Mammary epithelial cell (primary cell): ENCODE measurements at regions of chr9 and their contacts with region 1.

Region 1: GRCh38 chr9:134325817-134326723 is at the start of gene RXRA:
- DNase-seq: peak; percentile 77
- H3K4me3 ChIP-seq: peak within 1 kb of the TSS; percentile 64 to 78 (median 69)
- H3K27ac ChIP-seq: peak within 1 kb of the TSS; percentile 77
- H3K4me1 ChIP-seq: peaks cover 64% of the 10 kb centered on the region
- H3K27me3 ChIP-seq: no peaks in the 10 kb centered on the region
- CTCF ChIP-seq: no peak
- total RNA-seq, gene RXRA: 31.0 to 39.2 TPM

Region 2: GRCh38 chr9:134163353-134164196 is 162.5 kb before region 1 on chr9:
- CTCF ChIA-PET with region 1: no interaction called
- dilution Hi-C with region 1: no loop called
- in situ Hi-C with region 1: loop called in 1 of 2 experiments (anchors 10 kb)
- intact Hi-C with region 1: loop called (anchors 2 kb)
- DNase-seq: peak; percentile 25
- H3K4me3 ChIP-seq: peak overlapping the region; percentile 24 to 45 (median 41)
- H3K27ac ChIP-seq: no peak overlapping the region
- H3K4me1 ChIP-seq: peaks cover 5% of the 10 kb centered on the region
- H3K27me3 ChIP-seq: no peaks in the 10 kb centered on the region
- CTCF ChIP-seq: peak in 1 of 2 donors; percentile 13

Region 3: GRCh38 chr9:134358662-134359319 is 32.7 kb after region 1 on chr9:
- CTCF ChIA-PET with region 1: no interaction called
- dilution Hi-C with region 1: no loop called
- in situ Hi-C with region 1: no loop called
- intact Hi-C with region 1: loop called (anchors 2 kb)
- DNase-seq: peak; percentile 66
- H3K4me3 ChIP-seq: no peak overlapping the region
- H3K27ac ChIP-seq: no peak overlapping the region
- H3K4me1 ChIP-seq: peaks cover 75% of the 10 kb centered on the region
- H3K27me3 ChIP-seq: no peaks in the 10 kb centered on the region
- CTCF ChIP-seq: no peak

Region 4: DNA sequence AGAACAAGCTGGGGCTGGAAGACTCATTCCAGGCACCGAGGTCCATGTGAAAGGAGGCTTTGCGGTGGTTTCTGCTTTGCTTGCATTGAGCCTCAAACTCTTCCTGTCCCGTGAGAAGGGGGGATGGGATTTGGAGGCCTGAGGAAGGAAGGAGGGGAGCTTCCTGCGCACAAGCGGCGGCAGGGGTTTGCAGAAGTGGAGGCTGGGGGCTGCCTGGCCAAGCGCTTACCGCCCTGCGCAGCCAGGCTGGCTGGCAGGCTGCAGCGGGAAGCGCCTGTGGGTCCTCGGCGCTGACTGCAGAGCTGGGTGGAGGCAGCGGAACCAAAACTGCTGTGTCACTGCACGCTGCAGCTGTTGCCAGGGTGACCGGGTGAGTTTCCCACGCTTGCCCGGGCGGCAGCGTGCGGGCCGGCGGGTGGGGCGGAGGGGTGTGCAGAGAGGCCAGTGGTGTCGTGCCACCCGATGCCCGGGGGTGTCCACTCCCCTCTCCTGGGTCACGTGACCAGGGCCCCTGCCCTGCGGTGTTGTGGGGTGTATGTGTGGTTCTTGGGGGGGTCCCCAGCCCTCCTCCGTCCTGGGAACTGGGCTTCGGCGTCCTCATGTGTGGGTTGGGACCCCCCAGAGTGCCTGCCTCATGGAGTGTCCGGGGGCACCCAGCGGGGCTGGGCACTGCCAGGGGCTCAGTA is 81.2 kb after region 1 on chr9:
- CTCF ChIA-PET with region 1: interaction called, 4 read pairs
- dilution Hi-C with region 1: loop called (anchors 10 kb)
- in situ Hi-C with region 1: no loop called
- intact Hi-C with region 1: loop called (anchors 2 kb)
- DNase-seq: peak; percentile 90
- H3K4me3 ChIP-seq: peak overlapping the region in 2 of 3 experiments; percentile 1 to 34
- H3K27ac ChIP-seq: peak overlapping the region; percentile 88
- H3K4me1 ChIP-seq: peaks cover 38% of the 10 kb centered on the region
- H3K27me3 ChIP-seq: no peaks in the 10 kb centered on the region
- CTCF ChIP-seq: no peak

Region 5: GRCh38 chr9:134443168-134444037 is 117.3 kb after region 1 on chr9:
- CTCF ChIA-PET with region 1: no interaction called
- dilution Hi-C with region 1: loop called (anchors 5 kb)
- in situ Hi-C with region 1: no loop called
- intact Hi-C with region 1: loop called (anchors 1 kb)
- DNase-seq: peak; percentile 94
- H3K4me3 ChIP-seq: no peak overlapping the region
- H3K27ac ChIP-seq: no peak overlapping the region
- H3K4me1 ChIP-seq: peaks cover 12% of the 10 kb centered on the region
- H3K27me3 ChIP-seq: no peaks in the 10 kb centered on the region
- CTCF ChIP-seq: peak; percentile 83 to 97